K562 (cell line): ENCODE measurements at regions of chr16 and their contacts with region 1.

Region 1: DNA sequence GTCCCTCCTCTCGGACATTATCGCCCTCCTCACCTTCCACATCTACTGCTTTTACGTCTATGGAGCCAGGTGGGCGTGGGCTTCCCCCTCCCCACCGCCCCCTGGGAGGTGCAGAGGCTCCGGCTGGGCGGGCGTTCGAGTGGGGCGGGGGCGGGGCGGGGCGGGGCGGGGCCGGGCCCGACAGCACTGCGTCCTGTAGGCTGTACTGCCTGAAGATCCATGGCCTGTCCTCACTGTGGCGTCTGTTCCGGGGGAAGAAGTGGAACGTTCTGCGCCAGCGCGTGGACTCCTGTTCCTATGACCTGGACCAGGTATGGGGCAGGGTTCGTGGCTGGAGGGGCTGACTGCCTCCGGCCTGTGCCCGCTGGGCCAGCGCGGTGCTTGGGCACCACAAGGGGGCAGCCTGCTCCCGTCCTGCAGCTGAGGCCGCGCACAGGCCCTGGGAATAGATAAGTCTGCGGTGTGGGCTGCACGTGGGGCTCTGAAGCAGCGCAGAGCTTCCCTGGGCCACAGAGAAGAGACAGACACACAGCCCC is 9.2 kb downstream of the PIGQ start:
- DNase-seq: peak; percentile 67 to 94 (median 79)
- ATAC-seq: peak; percentile 97
- H3K4me3 ChIP-seq: no peak overlapping the region
- H3K27ac ChIP-seq: no peak overlapping the region
- H3K4me1 ChIP-seq: peaks cover 0 to 87% of the 10 kb centered on the region in 2 experiments; a peak in 4 of 5 replicates
- H3K27me3 ChIP-seq: no peaks in the 10 kb centered on the region
- CTCF ChIP-seq: peak; percentile 91 to 95 (median 95)
- EP300 ChIP-seq: 0 out of 2 replicates have a peak, but pooled peaks have one; percentile 16
- POLR2A ChIP-seq: no peak; the same call in 1 of the 2 replicates
- RAD21 ChIP-seq: peak; percentile 88 to 92

Region 2: DNA sequence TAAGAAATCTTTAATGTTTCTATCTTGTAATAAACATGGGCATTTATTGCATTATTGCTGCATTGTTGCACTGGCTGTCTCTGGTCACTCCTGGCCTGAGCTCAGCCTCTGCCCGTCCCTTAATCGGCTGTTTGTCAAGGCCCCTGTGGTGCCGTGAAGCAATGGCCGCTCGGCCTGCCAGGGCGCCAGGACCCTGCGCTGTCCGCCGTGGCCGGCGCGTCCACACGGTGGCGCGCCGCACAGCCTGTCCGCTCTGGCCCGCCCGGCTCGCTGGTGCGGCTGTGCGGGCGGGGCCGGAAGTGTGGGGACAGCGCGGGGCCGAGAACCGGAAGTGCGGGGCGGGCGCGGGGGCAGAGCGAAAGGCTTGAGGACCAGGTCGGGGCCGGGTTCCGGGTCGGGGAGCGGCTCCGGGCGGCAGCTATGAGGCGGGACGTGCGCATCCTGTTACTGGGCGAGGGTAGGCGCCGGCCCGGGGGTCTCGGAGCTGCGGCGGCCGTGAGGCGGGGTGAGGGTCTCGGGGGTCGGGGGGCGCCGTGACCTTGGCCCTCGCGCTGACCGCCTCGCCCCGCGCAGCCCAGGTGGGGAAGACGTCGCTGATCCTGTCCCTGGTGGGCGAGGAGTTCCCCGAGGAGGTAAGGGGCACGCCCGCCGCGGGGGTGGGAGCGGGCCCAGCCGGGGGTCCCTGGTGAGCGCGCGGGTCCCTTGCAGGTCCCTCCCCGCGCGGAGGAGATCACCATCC is 89.0 kb after region 1 on chr16 and contains the start of gene RHOT2:
- CTCF ChIA-PET with region 1: interaction called, 3 read pairs
- POLR2A ChIA-PET with region 1: interaction called, 3 read pairs
- in situ Hi-C with region 1: loop called (anchors 5 kb)
- intact Hi-C with region 1: loop called (anchors 5 kb)
- DNase-seq: peak; percentile 87 to 96 (median 88)
- ATAC-seq: peak; percentile 98
- H3K4me3 ChIP-seq: peak within 1 kb of the TSS; percentile 99
- H3K27ac ChIP-seq: peak within 1 kb of the TSS; percentile 86
- H3K4me1 ChIP-seq: peaks cover 11 to 91% of the 10 kb centered on the region in 2 experiments; a peak in 4 of 5 replicates
- H3K27me3 ChIP-seq: no peaks in the 10 kb centered on the region
- CTCF ChIP-seq: peak; percentile 77 to 97 (median 91)
- EP300 ChIP-seq: peak; percentile 65
- POLR2A ChIP-seq: peak; percentile 80
- RAD21 ChIP-seq: peak; percentile 50 to 69
- polyA plus RNA-seq, gene RHOT2: 5.0 to 6.8 TPM